Pancreas (tissue), 10 donors: ENCODE measurements at regions of chr22 and their contacts with region 1.

Region 1: DNA sequence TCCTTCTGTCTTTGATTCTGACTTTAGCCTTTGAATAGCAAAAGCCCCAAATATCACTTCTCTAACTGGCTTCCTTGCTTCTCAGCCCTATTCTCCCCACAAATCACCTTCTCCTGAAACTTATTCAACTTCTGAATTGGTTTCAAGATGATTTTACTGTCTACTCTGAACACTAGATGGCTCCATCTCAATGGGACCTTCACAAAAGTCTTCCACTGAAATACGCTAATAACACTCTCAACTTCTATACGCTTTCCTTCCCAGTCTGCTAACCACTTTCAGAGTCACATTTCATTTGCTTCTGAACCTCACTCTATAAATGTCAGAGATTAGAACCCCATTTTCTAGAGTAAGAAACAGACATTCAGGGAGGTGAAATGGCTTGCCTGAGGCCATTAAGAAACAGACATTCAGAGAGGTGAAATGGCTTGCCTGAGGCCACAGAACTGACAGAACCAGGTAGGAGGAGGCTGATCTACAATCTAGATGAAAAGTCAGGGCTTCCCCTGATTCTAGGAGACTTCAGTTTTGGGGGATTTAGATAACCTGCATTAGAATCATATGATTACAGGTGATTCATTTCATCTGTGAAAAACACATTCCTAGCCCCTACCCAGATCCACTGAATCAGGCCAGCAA is 20.6 kb downstream of the MORC2 start:
- DNase-seq: no peak
- ATAC-seq: peak in 3 of 4 donors; percentile 80 to 90 (median 81)
- H3K4me3 ChIP-seq: no peak overlapping the region
- H3K27ac ChIP-seq: no peak overlapping the region
- H3K4me1 ChIP-seq: no peaks in the 10 kb centered on the region
- H3K27me3 ChIP-seq: no peaks in the 10 kb centered on the region
- CTCF ChIP-seq: peak in 2 of 4 donors; percentile 25 to 33

Region 2: DNA sequence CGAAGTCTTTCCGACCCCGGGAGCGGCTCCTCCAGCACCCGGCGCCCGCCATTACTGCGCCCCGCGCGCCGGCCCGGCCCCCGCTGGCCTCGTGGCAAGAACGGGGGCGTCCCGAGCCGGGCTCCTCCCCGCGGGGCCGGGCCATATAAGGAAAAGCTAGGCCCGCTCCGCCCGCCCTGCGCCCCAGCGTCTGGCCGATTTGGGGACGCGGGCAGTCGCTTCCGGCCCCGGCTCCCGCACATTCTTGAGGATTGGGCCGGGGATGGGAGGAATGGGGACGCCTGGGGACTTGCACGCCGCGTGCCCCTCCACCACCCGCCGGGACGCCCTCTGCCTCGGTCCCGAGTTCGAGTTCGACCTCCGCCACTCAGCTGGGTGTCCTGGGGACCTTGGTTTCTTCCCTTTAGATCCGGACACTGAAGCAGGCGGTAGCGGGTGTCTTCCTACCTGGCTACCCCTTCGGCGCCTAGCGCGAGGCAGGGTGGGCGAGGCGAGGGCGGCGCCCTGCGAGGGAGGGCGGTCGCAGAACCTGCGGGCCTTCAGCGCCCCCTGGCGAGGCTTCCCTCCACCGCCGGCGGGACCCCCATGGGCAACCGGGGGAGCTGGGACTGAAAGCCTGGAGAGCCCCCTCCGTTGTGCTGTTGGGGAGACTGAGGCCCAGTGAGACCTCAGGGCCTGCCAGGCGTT is 137.0 kb after region 1 on chr22:
- intact Hi-C with region 1: loop called in 2 of 3 experiments (anchors 5 kb)
- DNase-seq: peak; percentile 72 to 90 (median 80)
- ATAC-seq: peak; percentile 36 to 68 (median 57)
- H3K4me3 ChIP-seq: peak overlapping the region; percentile 18 to 60 (median 44)
- H3K27ac ChIP-seq: peak overlapping the region; percentile 84 to 94 (median 88)
- H3K4me1 ChIP-seq: peaks cover 12 to 33% (median 32%) of the 10 kb centered on the region in 3 donors
- H3K27me3 ChIP-seq: no peaks in the 10 kb centered on the region
- CTCF ChIP-seq: peak; percentile 47 to 77 (median 62)

Region 3: DNA sequence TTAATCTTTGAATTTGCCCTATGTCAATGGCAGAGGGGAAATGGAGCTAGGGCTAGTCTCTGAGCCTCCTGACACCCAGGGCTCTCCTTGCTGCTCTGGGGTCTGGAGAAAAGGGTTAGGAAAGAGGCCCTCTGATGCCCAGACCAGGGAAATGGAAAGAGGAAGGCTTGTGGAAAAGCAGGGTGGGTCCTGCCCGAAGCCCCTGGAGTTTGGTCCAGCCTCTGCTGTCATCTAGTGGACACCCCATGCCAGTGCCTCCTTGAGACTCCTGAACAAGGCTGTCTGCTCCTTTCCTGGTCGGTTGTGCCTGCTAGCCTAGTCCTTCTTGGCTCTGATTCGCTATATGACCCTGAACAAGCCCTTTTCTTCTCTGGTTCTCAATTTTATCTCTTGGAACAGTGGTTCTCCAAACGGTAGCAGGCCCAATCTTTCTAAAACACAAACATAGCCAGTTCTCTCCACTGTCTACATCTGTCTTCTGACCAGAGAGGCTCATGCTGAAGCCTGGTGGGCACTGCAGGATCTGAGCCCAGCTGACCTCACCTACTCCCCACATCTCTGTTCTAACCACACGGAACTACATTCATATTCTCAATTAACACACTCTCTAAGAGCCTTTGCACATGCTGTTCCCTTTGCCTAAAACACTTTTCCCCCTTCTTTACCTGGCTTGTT is 201.2 kb after region 1 on chr22:
- intact Hi-C with region 1: loop called in 1 of 3 experiments (anchors 10 kb)
- DNase-seq: peak in 5 of 6 donors; percentile 65 to 84 (median 70)
- ATAC-seq: peak; percentile 93 to 100 (median 98)
- H3K4me3 ChIP-seq: no peak overlapping the region
- H3K27ac ChIP-seq: peak overlapping the region in 1 of 4 donors; percentile 22
- H3K4me1 ChIP-seq: peaks cover 0 to 2% (median 0%) of the 10 kb centered on the region in 3 donors
- H3K27me3 ChIP-seq: no peaks in the 10 kb centered on the region
- CTCF ChIP-seq: peak; percentile 67 to 80 (median 75)